Activated T-helper 1 cell treated with anti-CD3 and anti-CD28 coated beads, Interleukin-12 subunit alpha, Interleukin-12 subunit beta, Interleukin-2, Interleukin-4 antibody, amounts not matched to agents 30 ng/mL and 10 ng/mL and 1 ng/mL, durations not matched to agents 14 hours and 24 hours and 36 hours (primary cell): ENCODE measurements at regions of chr7 and their contacts with region 1.

Region 1: GRCh38 chr7:36677769-36678437 is 46.4 kb downstream of the AOAH start:
- DNase-seq: no peak
- H3K4me3 Mint-ChIP-seq: peak overlapping the region; percentile 67
- H3K27ac Mint-ChIP-seq: peak overlapping the region; percentile 89
- H3K4me1 Mint-ChIP-seq: peaks cover 56% of the 10 kb centered on the region
- H3K27me3 Mint-ChIP-seq: no peaks in the 10 kb centered on the region

Region 2: DNA sequence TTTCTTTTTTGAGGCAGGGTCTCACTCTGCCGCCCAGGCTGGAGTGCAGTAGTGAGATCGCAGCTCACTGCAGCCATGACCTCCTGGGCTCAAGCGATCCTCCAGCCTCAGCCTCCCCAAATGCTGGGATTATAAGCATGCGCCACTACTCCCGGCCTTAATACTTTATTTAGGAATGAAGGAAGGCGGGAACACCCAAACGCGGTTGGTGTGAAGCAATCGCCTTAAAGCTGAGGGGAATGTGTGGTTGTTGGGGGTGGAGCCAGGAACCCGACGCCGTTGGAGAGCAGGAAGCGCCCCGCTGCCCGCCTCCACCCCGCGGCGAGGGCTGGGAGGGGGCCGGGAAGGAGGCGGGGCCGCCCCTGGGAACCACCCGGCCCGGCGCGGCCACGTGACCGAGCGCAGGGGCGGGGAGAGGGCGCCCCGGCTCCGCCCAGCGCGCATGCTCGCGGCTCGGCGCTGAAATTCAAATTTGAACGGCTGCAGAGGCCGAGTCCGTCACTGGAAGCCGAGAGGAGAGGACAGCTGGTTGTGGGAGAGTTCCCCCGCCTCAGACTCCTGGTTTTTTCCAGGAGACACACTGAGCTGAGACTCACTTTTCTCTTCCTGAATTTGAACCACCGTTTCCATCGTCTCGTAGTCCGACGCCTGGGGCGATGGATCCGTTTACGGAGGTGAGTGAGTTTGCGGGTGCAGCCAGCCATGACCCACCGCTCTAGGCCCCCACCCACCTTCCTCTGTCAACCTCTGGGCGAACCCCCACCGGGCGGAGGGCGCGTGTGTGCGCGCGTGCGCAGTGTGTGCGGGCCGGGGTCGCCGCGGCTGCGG is 288.3 kb before region 1 on chr7 and contains the start of gene ANLN:
- intact Hi-C with region 1: loop called (anchors 2 kb)
- DNase-seq: peak; percentile 84
- H3K4me3 Mint-ChIP-seq: peak within 1 kb of the TSS; percentile 86
- H3K27ac Mint-ChIP-seq: peak within 1 kb of the TSS; percentile 78
- H3K4me1 Mint-ChIP-seq: peaks cover 37% of the 10 kb centered on the region
- H3K27me3 Mint-ChIP-seq: peaks cover 12% of the 10 kb centered on the region
- total RNA-seq, gene ANLN: 23.8 and 31.0 TPM in 2 replicates

Region 3: GRCh38 chr7:36707465-36707864 is 29.6 kb after region 1 on chr7:
- intact Hi-C with region 1: loop called (anchors 1 kb)
- DNase-seq: no peak
- H3K4me3 Mint-ChIP-seq: no peak overlapping the region
- H3K27ac Mint-ChIP-seq: peak overlapping the region; percentile 82
- H3K4me1 Mint-ChIP-seq: peaks cover 71% of the 10 kb centered on the region
- H3K27me3 Mint-ChIP-seq: no peaks in the 10 kb centered on the region

Region 4: GRCh38 chr7:36852017-36852416 is 174.1 kb after region 1 on chr7:
- intact Hi-C with region 1: loop called (anchors 1 kb)
- DNase-seq: no peak
- H3K4me3 Mint-ChIP-seq: peak overlapping the region; percentile 4
- H3K27ac Mint-ChIP-seq: peak overlapping the region; percentile 83
- H3K4me1 Mint-ChIP-seq: peaks cover 21% of the 10 kb centered on the region
- H3K27me3 Mint-ChIP-seq: no peaks in the 10 kb centered on the region

Region 5: DNA sequence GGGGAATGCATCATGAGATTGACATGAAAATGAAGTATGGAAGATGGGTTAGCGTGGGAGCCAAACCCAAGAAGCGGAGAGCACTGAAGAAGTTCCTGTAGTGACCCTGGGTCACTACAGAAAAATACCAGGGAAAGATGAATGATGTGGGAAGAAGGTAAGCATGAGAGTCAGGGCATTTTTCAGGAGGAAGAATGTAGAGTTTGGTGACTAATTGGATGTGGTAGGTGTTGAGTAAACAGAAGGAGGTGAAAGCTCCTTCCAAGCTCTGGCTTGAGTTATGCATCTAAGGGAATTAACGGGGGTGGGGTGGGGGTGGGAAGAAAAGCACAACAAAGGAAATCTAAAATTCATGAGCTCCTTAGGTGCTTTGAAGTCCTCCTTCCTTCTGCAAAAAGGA is 284.5 kb after region 1 on chr7:
- intact Hi-C with region 1: loop called (anchors 2 kb)
- DNase-seq: no peak
- H3K4me3 Mint-ChIP-seq: no peak overlapping the region
- H3K27ac Mint-ChIP-seq: peak overlapping the region; percentile 55
- H3K4me1 Mint-ChIP-seq: peaks cover 44% of the 10 kb centered on the region
- H3K27me3 Mint-ChIP-seq: no peaks in the 10 kb centered on the region

Region 6: DNA sequence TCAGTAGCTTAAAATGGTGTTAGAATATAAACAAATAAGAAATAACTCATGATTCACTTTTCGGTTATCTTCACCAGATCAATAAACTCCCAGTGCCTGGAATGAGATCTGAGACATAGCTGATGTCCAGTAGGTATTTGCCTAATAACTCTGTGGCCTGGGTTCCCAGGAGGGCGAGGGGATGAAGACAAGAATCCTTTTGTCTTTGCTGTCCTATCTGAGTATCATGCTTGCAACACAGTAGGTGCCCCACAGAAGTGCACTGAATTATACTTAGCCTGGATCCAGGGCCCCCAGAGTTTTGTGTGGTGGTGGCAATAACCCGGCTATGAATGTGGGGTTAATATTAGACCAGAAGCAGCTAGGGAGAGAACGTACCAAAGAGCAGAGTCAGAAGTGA is 396.5 kb after region 1 on chr7:
- intact Hi-C with region 1: loop called (anchors 5 kb)
- DNase-seq: no peak
- H3K4me3 Mint-ChIP-seq: no peak overlapping the region
- H3K27ac Mint-ChIP-seq: no peak overlapping the region
- H3K4me1 Mint-ChIP-seq: peaks cover 46% of the 10 kb centered on the region
- H3K27me3 Mint-ChIP-seq: no peaks in the 10 kb centered on the region

Region 7: GRCh38 chr7:37342688-37343471 is 665.0 kb after region 1 on chr7:
- intact Hi-C with region 1: loop called (anchors 5 kb)
- DNase-seq: peak; percentile 62
- H3K4me3 Mint-ChIP-seq: peak overlapping the region; percentile 96
- H3K27ac Mint-ChIP-seq: peak overlapping the region; percentile 99
- H3K4me1 Mint-ChIP-seq: peaks cover 76% of the 10 kb centered on the region
- H3K27me3 Mint-ChIP-seq: no peaks in the 10 kb centered on the region